Activated naive CD4-positive, alpha-beta T cell treated with anti-CD3 and anti-CD28 coated beads for 36 hours (primary cell): ENCODE measurements at regions of chr3 and their contacts with region 1.

Region 1: DNA sequence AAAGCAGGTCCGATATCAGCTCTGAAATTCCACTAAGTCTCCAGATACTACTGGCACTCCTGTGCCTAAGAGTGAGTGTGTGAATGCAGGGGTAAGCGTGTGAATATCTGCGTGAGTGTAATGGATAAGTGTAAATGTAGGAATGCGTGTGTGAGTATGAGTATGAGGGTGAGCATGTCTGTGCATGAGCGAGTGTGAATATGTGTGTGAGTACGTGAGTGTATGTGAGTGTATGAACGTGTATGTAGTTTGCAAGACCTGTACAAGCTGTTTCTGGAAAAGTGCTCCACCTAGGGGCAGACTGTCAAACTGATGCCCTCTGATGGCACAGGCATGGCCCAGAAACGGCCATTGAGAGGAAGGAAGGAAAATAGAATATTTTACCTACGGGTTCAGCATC is 24.4 kb upstream of the FRMD4B start:
- DNase-seq: peak; percentile 88
- H3K4me3 Mint-ChIP-seq: no peak overlapping the region
- H3K27ac Mint-ChIP-seq: no peak overlapping the region
- H3K4me1 Mint-ChIP-seq: peaks cover 3% of the 10 kb centered on the region
- H3K27me3 Mint-ChIP-seq: peaks cover 5% of the 10 kb centered on the region

Region 2: DNA sequence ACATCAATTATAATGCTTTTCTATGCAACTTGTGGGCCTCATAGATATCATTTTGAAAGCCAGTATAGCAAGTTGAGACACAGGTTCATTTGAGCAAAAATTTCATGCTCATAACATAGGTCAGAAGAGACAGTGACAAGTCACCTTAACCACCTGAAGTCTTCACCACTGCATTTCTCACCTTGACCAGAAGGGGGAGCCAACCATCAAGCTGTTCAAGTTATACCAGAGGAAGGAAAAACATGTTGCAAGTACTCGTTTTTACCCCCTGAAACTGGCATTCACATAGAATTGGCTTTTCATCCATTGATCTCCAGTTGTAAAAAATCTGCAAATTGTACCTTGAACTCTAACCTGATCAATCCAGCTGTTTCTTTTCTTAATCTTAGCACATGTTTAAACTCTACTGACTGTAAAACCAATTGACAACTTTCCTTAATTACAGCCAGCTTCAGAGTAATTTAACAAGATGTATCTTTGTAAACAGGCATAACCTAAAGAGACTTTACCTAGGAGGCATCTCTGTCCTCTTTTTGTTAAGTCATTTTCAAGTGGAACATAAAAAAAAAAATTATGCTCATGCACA is 289.3 kb before region 1 on chr3:
- CTCF ChIA-PET with region 1: interaction called, 22 read pairs
- intact Hi-C with region 1: loop called (anchors 1 kb)
- DNase-seq: peak; percentile 95
- H3K4me3 Mint-ChIP-seq: no peak overlapping the region
- H3K27ac Mint-ChIP-seq: no peak overlapping the region
- H3K4me1 Mint-ChIP-seq: peaks cover 3% of the 10 kb centered on the region
- H3K27me3 Mint-ChIP-seq: no peaks in the 10 kb centered on the region

Region 3: DNA sequence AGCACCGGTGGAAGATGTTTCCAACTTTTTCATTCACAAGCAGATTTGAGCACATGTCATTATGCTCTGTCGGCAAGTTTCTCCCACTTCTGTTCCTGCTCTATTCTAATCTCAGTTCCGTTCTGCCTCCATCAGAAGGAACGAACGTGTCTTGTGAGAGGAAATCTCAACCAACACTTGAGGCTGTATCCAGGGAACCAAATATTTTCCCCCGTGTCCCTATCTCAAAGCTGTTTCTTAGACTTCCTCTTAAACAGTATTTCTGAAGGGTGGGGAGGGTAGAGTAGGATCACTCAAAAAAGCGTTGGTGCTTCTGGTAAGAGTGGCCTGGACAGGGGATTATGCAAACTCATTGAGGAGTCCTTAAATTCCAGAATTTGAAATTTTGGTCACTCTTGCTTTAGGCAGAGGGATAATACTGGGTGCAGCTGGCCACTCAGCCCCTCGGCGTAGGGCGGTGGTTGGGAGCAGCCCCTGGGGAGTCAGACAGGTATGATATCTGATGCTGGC is 79.3 kb before region 1 on chr3:
- CTCF ChIA-PET with region 1: interaction called, 11 read pairs
- intact Hi-C with region 1: no loop called
- DNase-seq: no peak
- H3K4me3 Mint-ChIP-seq: no peak overlapping the region
- H3K27ac Mint-ChIP-seq: no peak overlapping the region
- H3K4me1 Mint-ChIP-seq: peaks cover 29% of the 10 kb centered on the region
- H3K27me3 Mint-ChIP-seq: no peaks in the 10 kb centered on the region

Region 4: DNA sequence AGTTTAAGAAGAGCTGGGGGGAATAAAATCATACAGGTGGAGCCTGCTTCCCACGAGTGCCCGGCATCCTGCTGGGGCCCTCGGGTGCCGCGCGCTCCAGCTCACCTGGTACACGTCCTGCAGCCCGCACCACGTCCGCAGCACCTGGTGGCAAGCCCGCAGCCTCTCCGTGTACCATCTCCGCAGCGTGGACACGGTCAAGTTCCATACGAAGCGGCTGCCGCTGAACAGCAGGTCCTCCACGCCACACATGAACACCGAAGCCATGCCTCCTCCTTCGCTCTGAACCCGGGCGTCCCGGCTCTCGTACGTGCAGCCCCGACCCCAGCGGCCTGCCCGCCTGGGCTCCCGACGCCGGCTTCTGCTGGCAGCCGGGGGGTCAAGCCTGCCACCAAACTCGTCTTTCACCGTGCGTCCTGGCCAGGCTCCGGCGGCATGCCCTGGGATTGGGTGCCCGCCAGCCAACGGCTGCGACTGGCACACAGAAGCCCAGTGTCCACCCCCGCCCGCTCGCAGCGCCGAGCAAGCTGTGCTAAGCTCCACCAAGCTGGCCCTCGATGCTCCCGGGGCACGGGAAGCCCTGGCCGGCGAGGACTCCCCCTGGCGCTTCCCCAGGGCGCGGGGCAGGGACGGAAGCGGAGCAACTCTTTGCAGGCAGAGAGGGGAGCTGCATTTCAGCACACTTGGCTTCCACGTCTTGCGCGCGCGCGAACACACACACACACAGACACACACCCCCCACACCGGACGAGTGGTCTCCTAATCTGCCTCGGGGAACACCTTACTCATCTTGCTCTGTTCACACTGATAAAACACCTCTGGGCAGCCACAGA is 24.3 kb before region 1 on chr3 and contains the start of gene FRMD4B:
- CTCF ChIA-PET with region 1: interaction called, 14 read pairs
- intact Hi-C with region 1: no loop called
- DNase-seq: peak; percentile 51
- H3K4me3 Mint-ChIP-seq: peak within 1 kb of the TSS; percentile 61
- H3K27ac Mint-ChIP-seq: no peak within 1 kb of the TSS
- H3K4me1 Mint-ChIP-seq: peaks cover 3% of the 10 kb centered on the region
- H3K27me3 Mint-ChIP-seq: peaks cover 55% of the 10 kb centered on the region
- total RNA-seq, gene FRMD4B: 11.9 to 12.1 TPM

Region 5: DNA sequence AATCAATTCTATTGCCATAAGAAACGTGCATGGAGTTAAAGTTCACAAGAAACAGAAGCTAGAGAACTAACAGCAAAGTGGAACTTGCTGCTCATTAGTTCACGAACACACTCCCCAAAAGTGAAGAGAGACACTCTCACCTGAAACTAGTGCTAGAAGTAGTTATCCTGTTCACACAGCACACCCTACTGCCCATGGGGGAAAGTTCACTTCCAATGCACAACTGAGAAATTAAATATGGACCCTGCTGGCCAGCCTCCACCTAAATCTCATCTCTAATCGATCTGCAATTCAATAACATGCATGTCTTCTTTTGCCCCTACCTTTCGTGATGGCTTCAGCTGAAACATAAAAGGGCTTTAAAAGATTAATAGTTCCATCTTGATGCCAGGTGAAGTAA is 15.0 kb after region 1 on chr3:
- CTCF ChIA-PET with region 1: interaction called, 10 read pairs
- intact Hi-C with region 1: no loop called
- DNase-seq: peak; percentile 57
- H3K4me3 Mint-ChIP-seq: no peak overlapping the region
- H3K27ac Mint-ChIP-seq: no peak overlapping the region
- H3K4me1 Mint-ChIP-seq: peaks cover 5% of the 10 kb centered on the region
- H3K27me3 Mint-ChIP-seq: no peaks in the 10 kb centered on the region